ENCODE measurements at regions of chr9 and their contacts with region 1.

Region 1: GRCh38 chr9:78127279-78128225 is 95.9 kb upstream of the GNAQ start:
- DNase-seq: no peak
- ATAC-seq: no peak

Region 2: GRCh38 chr9:77712533-77713130 is 414.9 kb before region 1 on chr9:
- intact Hi-C with region 1: loop called (anchors 5 kb)
- DNase-seq: no peak
- ATAC-seq: no peak

Region 3: GRCh38 chr9:78207319-78207718 is 79.8 kb after region 1 on chr9:
- intact Hi-C with region 1: no loop called
- DNase-seq: no peak
- ATAC-seq: no peak

Region 4: GRCh38 chr9:78261403-78262001 is 133.9 kb after region 1 on chr9:
- intact Hi-C with region 1: no loop called
- DNase-seq: no peak
- ATAC-seq: no peak

Measured in Right ventricle myocardium superior (tissue), 1 donor.